ENCODE measurements at regions of chr7 and their contacts with region 1.

Region 1: DNA sequence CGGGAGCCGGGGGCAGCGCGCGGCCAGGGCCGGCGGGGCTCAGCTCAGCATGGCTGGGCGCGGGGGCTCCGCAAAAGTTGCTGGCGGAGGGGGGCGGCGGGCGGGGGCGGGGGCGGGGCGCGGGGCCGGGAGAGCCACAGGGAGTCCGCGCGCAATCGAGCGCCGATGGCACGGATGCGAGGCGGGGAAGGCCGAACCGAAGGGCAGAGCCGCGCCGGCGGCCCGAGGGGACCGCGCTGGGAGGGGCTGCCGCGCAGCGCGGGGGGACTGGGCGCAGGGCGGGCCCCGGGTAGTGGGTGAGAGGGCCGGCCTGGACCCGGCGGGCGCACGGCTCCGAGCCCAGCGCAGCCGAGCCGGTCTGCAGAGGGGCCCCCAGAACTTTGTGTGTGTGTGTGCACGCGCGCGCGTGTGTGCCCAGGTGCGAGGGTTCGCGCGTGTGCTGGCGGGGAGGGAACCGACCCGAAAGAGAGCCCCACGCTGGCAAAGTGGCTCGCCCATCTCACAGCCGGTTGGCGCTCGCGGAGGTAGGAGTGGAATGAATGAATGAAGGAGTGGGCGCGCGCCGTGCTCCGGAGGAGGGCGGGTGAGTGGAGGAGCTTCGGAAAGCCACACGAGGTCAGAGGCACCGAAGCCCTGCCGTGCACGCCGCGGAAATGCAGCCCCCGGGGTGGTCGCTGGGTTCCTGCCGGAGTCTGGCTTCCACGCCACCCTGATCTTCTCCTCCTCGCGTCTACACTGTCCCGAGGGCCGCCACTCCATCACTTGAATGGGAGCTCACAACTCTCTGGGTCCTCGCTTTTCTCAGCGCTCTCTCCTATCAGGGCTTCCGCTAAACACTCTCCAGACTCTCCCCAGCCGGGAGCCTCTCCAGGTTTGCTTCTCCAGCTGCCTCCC is at the start of gene HIPK2:
- DNase-seq: peak; percentile 82
- ATAC-seq: peak; percentile 37
- H3K4me3 Mint-ChIP-seq: peak within 1 kb of the TSS; percentile 83
- H3K27ac Mint-ChIP-seq: peak within 1 kb of the TSS; percentile 93
- H3K4me1 Mint-ChIP-seq: peaks cover 41% of the 10 kb centered on the region
- H3K27me3 Mint-ChIP-seq: peaks cover 11% of the 10 kb centered on the region
- total RNA-seq, gene HIPK2: 23.9 to 36.2 TPM

Region 2: DNA sequence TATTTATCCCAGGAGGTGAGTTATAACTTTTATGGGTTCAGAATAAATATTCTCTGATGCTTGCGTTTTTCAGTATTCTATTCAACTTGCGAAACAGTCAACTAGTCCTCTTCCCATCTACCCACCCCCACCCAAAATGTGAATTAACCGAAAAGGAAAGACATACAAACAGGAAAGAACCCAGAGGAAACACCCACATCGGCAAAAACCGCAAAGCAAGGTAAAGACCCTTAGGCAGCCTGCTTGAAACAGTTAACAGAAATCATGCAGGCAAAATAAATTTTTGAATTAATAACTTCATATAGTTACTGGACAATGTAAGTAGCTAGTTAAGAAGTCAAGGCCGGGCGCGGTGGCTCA is 674.1 kb before region 1 on chr7:
- CTCF ChIA-PET with region 1: no interaction called
- POLR2A ChIA-PET with region 1: no interaction called
- intact Hi-C with region 1: loop called in 1 of 2 experiments (anchors 5 kb)
- DNase-seq: peak; percentile 67
- ATAC-seq: no peak
- H3K4me3 Mint-ChIP-seq: peak overlapping the region; percentile 99
- H3K27ac Mint-ChIP-seq: peak overlapping the region; percentile 93
- H3K4me1 Mint-ChIP-seq: peaks cover 40% of the 10 kb centered on the region
- H3K27me3 Mint-ChIP-seq: no peaks in the 10 kb centered on the region

Region 3: GRCh38 chr7:139673230-139673629 is 105.0 kb before region 1 on chr7:
- CTCF ChIA-PET with region 1: interaction called, 3 read pairs
- POLR2A ChIA-PET with region 1: no interaction called
- intact Hi-C with region 1: loop called in 1 of 2 experiments (anchors 2 kb)
- DNase-seq: peak; percentile 75
- ATAC-seq: peak; percentile 89
- H3K4me3 Mint-ChIP-seq: peak overlapping the region; percentile 3
- H3K27ac Mint-ChIP-seq: peak overlapping the region; percentile 88
- H3K4me1 Mint-ChIP-seq: peaks cover 56% of the 10 kb centered on the region
- H3K27me3 Mint-ChIP-seq: no peaks in the 10 kb centered on the region

Region 4: GRCh38 chr7:139798221-139798620 is 20.0 kb after region 1 on chr7:
- CTCF ChIA-PET with region 1: no interaction called
- POLR2A ChIA-PET with region 1: no interaction called
- intact Hi-C with region 1: no loop called
- DNase-seq: peak; percentile 20
- ATAC-seq: peak; percentile 30
- H3K4me3 Mint-ChIP-seq: no peak overlapping the region
- H3K27ac Mint-ChIP-seq: no peak overlapping the region
- H3K4me1 Mint-ChIP-seq: peaks cover 13% of the 10 kb centered on the region
- H3K27me3 Mint-ChIP-seq: no peaks in the 10 kb centered on the region

Region 5: GRCh38 chr7:140003913-140004382 is 225.8 kb after region 1 on chr7:
- CTCF ChIA-PET with region 1: interaction called, 3 read pairs
- POLR2A ChIA-PET with region 1: no interaction called
- intact Hi-C with region 1: loop called (anchors 1 to 2 kb)
- DNase-seq: peak; percentile 53
- ATAC-seq: peak; percentile 16
- H3K4me3 Mint-ChIP-seq: no peak overlapping the region
- H3K27ac Mint-ChIP-seq: no peak overlapping the region
- H3K4me1 Mint-ChIP-seq: no peaks in the 10 kb centered on the region
- H3K27me3 Mint-ChIP-seq: no peaks in the 10 kb centered on the region

Measured in activated CD4-positive, alpha-beta T cell treated with anti-CD3 and anti-CD28 coated beads for 36 hours (primary cell).